ENCODE measurements at regions of chr12 and their contacts with region 1.

Region 1: GRCh38 chr12:95473884-95474659 is at the start of gene METAP2:
- DNase-seq: peak; percentile 95
- ATAC-seq: peak; percentile 98
- H3K4me3 ChIP-seq: peak within 1 kb of the TSS; percentile 84
- H3K27ac ChIP-seq: peak within 1 kb of the TSS; percentile 89
- H3K4me1 ChIP-seq: no peaks in the 10 kb centered on the region
- H3K27me3 ChIP-seq: no peaks in the 10 kb centered on the region
- CTCF ChIP-seq: no peak
- POLR2A ChIP-seq: peak; percentile 98
- RAD21 ChIP-seq: no peak
- total RNA-seq, gene METAP2: 72.9 and 108 TPM in 2 replicates

Region 2: DNA sequence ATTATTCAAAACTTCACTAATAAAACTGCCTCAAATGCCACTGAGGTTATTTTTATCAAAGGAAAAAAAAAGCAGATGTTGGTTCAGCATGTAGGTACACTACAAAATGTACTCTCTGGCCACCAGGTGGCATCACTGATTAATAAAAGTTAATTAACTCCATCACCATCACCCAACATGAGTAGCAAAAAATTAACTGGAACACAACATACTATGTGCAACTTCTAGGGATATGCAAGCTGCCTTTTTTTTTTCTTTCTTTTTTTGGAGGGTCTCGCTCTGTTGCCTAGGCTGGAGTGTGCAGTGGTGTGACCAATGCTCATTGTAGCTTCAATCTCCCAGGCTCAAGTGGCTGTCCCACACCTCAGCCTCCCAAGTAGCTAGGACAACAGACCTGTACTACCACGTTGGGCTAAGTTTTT is 356.9 kb before region 1 on chr12:
- CTCF ChIA-PET with region 1: interaction called, 5 read pairs
- POLR2A ChIA-PET with region 1: no interaction called
- dilution Hi-C with region 1: no loop called
- in situ Hi-C with region 1: no loop called
- intact Hi-C with region 1: loop called (anchors 5 kb)
- DNase-seq: peak; percentile 75
- ATAC-seq: peak; percentile 72
- H3K4me3 ChIP-seq: no peak overlapping the region
- H3K27ac ChIP-seq: no peak overlapping the region
- H3K4me1 ChIP-seq: peaks cover 15% of the 10 kb centered on the region
- H3K27me3 ChIP-seq: no peaks in the 10 kb centered on the region
- CTCF ChIP-seq: peak; percentile 78
- POLR2A ChIP-seq: no peak
- RAD21 ChIP-seq: peak; percentile 80

Region 3: DNA sequence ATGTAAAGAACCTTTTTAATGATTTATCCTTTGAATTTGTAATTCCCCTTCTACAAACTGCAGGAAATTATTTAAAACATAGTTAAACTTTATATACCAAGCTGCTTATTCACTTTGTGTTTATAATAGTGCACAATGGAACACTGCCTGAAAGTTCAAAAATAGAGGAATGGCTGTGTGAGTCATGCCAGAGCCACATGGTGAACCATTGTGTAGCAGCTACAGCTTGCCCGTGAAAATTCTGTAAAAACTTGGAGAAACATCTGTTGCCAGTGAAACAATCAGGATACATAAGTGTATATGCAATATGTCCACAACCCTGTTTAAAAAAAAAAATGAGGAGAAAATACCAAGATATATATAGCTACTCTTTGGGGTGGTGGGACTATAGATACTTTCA is 196.9 kb before region 1 on chr12:
- CTCF ChIA-PET with region 1: no interaction called
- POLR2A ChIA-PET with region 1: no interaction called
- dilution Hi-C with region 1: no loop called
- in situ Hi-C with region 1: no loop called
- intact Hi-C with region 1: loop called (anchors 2 kb)
- DNase-seq: peak; percentile 97
- ATAC-seq: peak; percentile 97
- H3K4me3 ChIP-seq: no peak overlapping the region
- H3K27ac ChIP-seq: peak overlapping the region; percentile 40; the same call in 1 of the 2 replicates
- H3K4me1 ChIP-seq: peaks cover 5% of the 10 kb centered on the region; the same call in 1 of the 2 replicates
- H3K27me3 ChIP-seq: no peaks in the 10 kb centered on the region
- CTCF ChIP-seq: no peak
- POLR2A ChIP-seq: no peak
- RAD21 ChIP-seq: no peak

Region 4: GRCh38 chr12:95328708-95329107 is 145.4 kb before region 1 on chr12:
- CTCF ChIA-PET with region 1: no interaction called
- POLR2A ChIA-PET with region 1: no interaction called
- dilution Hi-C with region 1: no loop called
- in situ Hi-C with region 1: no loop called
- intact Hi-C with region 1: no loop called
- DNase-seq: no peak
- ATAC-seq: no peak
- H3K4me3 ChIP-seq: no peak overlapping the region
- H3K27ac ChIP-seq: no peak overlapping the region
- H3K4me1 ChIP-seq: peaks cover 4% of the 10 kb centered on the region
- H3K27me3 ChIP-seq: no peaks in the 10 kb centered on the region
- CTCF ChIP-seq: no peak
- POLR2A ChIP-seq: no peak
- RAD21 ChIP-seq: no peak

Region 5: GRCh38 chr12:95440401-95440800 is 33.7 kb before region 1 on chr12:
- CTCF ChIA-PET with region 1: no interaction called
- POLR2A ChIA-PET with region 1: no interaction called
- dilution Hi-C with region 1: no loop called
- in situ Hi-C with region 1: no loop called
- intact Hi-C with region 1: no loop called
- DNase-seq: peak; percentile 67
- ATAC-seq: peak; percentile 77
- H3K4me3 ChIP-seq: no peak overlapping the region
- H3K27ac ChIP-seq: no peak overlapping the region
- H3K4me1 ChIP-seq: no peaks in the 10 kb centered on the region; the same call in 1 of the 2 replicates
- H3K27me3 ChIP-seq: no peaks in the 10 kb centered on the region; the same call in 1 of the 2 replicates
- CTCF ChIP-seq: no peak
- POLR2A ChIP-seq: no peak
- RAD21 ChIP-seq: no peak

Region 6: DNA sequence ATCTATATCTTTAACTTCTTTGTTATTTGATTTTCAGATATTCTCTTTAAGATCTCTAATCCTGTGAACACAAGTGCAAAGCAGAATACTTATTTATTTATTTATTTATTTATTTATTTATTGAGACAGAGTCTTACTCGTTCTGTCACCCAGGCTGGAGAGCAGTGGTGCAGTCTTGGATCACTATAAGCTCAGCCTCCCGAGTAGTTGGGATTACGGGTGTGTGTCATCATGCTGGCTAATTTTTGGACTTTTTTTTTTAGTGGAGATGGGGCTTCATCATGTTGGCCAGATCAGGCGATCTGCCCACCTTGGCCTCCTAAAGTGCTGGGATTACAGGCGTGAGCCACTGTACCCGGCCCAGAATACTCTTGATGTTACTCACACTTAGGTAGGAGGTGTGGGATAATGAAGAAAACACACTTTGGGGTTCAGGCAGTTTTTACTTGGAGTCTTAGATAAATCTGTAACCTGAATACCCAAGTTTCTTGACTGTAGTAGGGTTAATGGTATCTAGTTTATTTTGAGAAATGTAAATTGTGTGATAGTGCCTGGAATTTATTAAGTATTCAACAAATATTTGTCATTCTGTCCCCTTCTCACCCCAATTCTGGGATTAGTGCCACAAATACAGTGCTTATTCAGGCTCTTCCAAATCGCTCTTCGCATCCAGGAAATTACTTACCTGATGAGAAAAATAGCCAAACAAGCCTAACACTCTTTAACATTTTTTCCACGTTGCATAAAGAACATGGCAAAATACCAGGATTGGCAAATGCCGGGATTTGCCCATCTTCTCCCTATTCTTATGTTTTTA is 32.8 kb after region 1 on chr12:
- CTCF ChIA-PET with region 1: no interaction called
- POLR2A ChIA-PET with region 1: no interaction called
- dilution Hi-C with region 1: no loop called
- in situ Hi-C with region 1: no loop called
- intact Hi-C with region 1: no loop called
- DNase-seq: peak; percentile 7
- ATAC-seq: no peak
- H3K4me3 ChIP-seq: no peak overlapping the region
- H3K27ac ChIP-seq: no peak overlapping the region
- H3K4me1 ChIP-seq: peaks cover 2% of the 10 kb centered on the region
- H3K27me3 ChIP-seq: no peaks in the 10 kb centered on the region
- CTCF ChIP-seq: no peak
- POLR2A ChIP-seq: no peak
- RAD21 ChIP-seq: no peak